ENCODE measurements at regions of chr6 and their contacts with region 1.

Region 1: DNA sequence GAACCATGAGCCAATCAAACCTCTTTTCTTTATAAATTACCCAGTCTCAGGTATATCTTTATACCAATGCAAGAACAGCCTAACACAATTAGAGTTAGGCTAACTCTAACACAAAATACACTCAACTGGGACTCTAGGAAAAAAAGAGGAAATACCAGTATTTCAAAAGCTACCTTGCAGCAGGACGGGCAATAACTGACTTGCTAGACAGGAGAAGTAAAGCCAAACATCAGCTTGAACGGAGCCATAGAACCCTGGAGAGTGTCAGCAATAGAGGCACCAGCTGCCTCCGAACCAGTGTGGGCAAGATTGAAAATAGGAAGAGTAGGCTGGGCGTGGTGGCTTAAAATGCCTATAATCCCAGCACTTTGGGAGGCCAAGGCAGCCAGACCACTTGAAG is 162.0 kb upstream of the SOX4 start:
- DNase-seq: no peak
- ATAC-seq: no peak
- H3K4me3 ChIP-seq: no peak overlapping the region
- H3K27ac ChIP-seq: no peak overlapping the region
- H3K4me1 ChIP-seq: no peaks in the 10 kb centered on the region
- H3K27me3 ChIP-seq: no peaks in the 10 kb centered on the region
- CTCF ChIP-seq: no peak

Region 2: DNA sequence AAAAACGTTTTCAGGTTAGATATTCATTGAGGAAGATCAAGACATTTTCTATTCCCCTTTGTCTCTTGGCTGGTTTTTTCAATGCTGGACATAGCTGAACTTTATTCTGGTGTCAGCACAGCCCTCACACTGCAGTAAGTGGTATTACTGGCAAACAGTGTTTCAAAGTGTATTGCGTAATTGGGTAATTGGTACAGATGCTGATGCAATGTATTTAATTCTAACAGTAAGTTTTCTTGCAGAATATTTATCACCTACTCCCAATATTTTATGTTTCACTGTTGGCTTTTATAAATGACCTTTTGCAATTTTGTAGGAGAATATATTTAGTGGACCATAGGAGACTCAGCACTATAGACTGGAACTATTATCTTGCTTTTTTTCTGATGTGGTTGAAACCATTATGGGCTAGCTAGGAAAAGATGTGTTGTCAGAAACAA is 125.6 kb before region 1 on chr6:
- intact Hi-C with region 1: no loop called
- DNase-seq: no peak
- ATAC-seq: peak in 1 of 8 donors; percentile 45
- H3K4me3 ChIP-seq: no peak overlapping the region
- H3K27ac ChIP-seq: no peak overlapping the region
- H3K4me1 ChIP-seq: peaks cover 0 to 7% (median 0%) of the 10 kb centered on the region in 9 donors
- H3K27me3 ChIP-seq: no peaks in the 10 kb centered on the region
- CTCF ChIP-seq: peak in 1 of 9 donors; percentile 8

Region 3: GRCh38 chr6:21565431-21565830 is 133.9 kb after region 1 on chr6:
- intact Hi-C with region 1: loop called in 1 of 10 experiments (anchors 2 kb)
- DNase-seq: no peak
- ATAC-seq: no peak
- H3K4me3 ChIP-seq: no peak overlapping the region
- H3K27ac ChIP-seq: no peak overlapping the region
- H3K4me1 ChIP-seq: no peaks in the 10 kb centered on the region
- H3K27me3 ChIP-seq: no peaks in the 10 kb centered on the region
- CTCF ChIP-seq: no peak

Measured in heart right ventricle (tissue), 16 donors.